AG04450 (cell line): ENCODE measurements at regions of chr6 and their contacts with region 1.

Region 1: GRCh38 chr6:110528101-110528929 is 51.9 kb upstream of the SLC22A16 start:
- DNase-seq: no peak
- H3K4me3 ChIP-seq: no peak overlapping the region
- H3K27ac ChIP-seq: peak overlapping the region; percentile 69
- H3K27me3 ChIP-seq: no peaks in the 10 kb centered on the region
- CTCF ChIP-seq: peak; percentile 72

Region 2: GRCh38 chr6:110517601-110518281 is 10.6 kb before region 1 on chr6:
- CTCF ChIA-PET with region 1: interaction called, 26 read pairs
- POLR2A ChIA-PET with region 1: no interaction called
- DNase-seq: no peak
- H3K4me3 ChIP-seq: no peak overlapping the region
- H3K27ac ChIP-seq: no peak overlapping the region
- H3K27me3 ChIP-seq: no peaks in the 10 kb centered on the region
- CTCF ChIP-seq: no peak

Region 3: DNA sequence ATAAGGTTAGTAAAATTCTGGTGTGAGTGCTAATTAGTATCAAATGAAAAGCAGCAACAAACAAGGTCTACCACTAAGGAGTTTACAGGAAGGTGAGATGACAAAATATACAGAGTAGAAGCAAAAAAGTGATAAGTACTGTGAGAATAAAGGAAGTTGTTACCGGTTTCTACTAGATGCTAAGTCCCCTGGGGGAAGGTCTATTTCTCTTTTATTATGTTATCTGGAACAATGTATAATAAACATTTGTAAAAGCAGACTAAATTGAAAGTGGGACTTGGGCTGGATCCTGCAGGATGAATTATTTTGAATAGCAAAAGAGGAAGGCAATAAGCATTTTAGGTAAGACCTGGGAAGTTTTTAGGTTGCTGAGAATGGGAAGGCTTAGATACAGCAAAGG is 106.8 kb after region 1 on chr6:
- CTCF ChIA-PET with region 1: no interaction called
- POLR2A ChIA-PET with region 1: no interaction called
- DNase-seq: no peak
- H3K4me3 ChIP-seq: no peak overlapping the region
- H3K27ac ChIP-seq: no peak overlapping the region
- H3K27me3 ChIP-seq: no peaks in the 10 kb centered on the region
- CTCF ChIP-seq: no peak

Region 4: GRCh38 chr6:110949679-110950285 is 421.5 kb after region 1 on chr6:
- CTCF ChIA-PET with region 1: interaction called, 34 read pairs
- POLR2A ChIA-PET with region 1: no interaction called
- DNase-seq: no peak
- H3K4me3 ChIP-seq: no peak overlapping the region
- H3K27ac ChIP-seq: no peak overlapping the region
- H3K27me3 ChIP-seq: no peaks in the 10 kb centered on the region
- CTCF ChIP-seq: peak; percentile 55

Region 5: DNA sequence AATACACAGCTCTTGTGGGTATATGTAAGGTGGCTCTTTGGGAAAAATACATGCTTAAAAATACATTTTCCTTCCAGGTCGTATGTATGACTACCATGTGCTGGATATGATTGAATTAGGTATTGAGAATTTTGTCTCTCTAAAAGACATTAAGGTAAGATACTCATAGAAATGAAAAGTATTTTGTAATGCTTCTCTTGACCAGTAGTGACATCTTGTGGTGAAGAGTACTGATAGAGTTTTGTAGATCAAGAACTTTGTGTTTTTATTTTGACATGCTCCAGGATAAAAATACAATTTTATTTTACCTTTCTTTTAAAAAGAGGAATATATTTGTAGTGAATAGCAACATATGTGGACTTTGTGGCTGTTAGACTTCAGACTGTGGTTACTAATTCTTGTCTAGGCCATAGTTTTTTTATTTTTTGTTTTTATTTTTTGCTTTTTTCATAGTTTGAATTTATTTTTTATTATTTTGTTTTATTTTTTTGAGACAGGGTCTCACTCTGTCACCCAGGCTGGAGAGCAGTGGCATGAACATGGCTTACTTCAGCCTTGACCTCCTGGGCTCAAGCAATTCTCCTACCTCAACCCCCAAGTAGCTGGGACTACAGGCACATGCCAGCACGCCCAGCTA is 471.4 kb after region 1 on chr6:
- CTCF ChIA-PET with region 1: interaction called, 11 read pairs
- POLR2A ChIA-PET with region 1: no interaction called
- DNase-seq: no peak
- H3K4me3 ChIP-seq: no peak overlapping the region
- H3K27ac ChIP-seq: no peak overlapping the region
- H3K27me3 ChIP-seq: no peaks in the 10 kb centered on the region
- CTCF ChIP-seq: peak; percentile 50

Region 6: GRCh38 chr6:111210194-111210728 is 681.9 kb after region 1 on chr6:
- CTCF ChIA-PET with region 1: interaction called, 10 read pairs
- POLR2A ChIA-PET with region 1: no interaction called
- DNase-seq: peak; percentile 16
- H3K4me3 ChIP-seq: no peak overlapping the region
- H3K27ac ChIP-seq: no peak overlapping the region
- H3K27me3 ChIP-seq: no peaks in the 10 kb centered on the region
- CTCF ChIP-seq: peak; percentile 78